Prostate gland (tissue), 2 donors: ENCODE measurements at regions of chr14 and their contacts with region 1.

Region 1: GRCh38 chr14:72825486-72825885 is 68.4 kb downstream of the DPF3 start:
- DNase-seq: no peak
- H3K4me3 ChIP-seq: no peak overlapping the region
- H3K27ac ChIP-seq: no peak overlapping the region
- H3K4me1 ChIP-seq: no peaks in the 10 kb centered on the region
- H3K27me3 ChIP-seq: peaks cover 4% of the 10 kb centered on the region
- CTCF ChIP-seq: no peak
- POLR2A ChIP-seq: no peak

Region 2: GRCh38 chr14:72812292-72812911 is 13.1 kb before region 1 on chr14:
- intact Hi-C with region 1: loop called (anchors 1 kb)
- DNase-seq: no peak
- H3K4me3 ChIP-seq: no peak overlapping the region
- H3K27ac ChIP-seq: no peak overlapping the region
- H3K4me1 ChIP-seq: no peaks in the 10 kb centered on the region
- H3K27me3 ChIP-seq: no peaks in the 10 kb centered on the region
- CTCF ChIP-seq: no peak
- POLR2A ChIP-seq: no peak